Body of pancreas (tissue), 4 donors: ENCODE measurements at regions of chr7 and their contacts with region 1.

Region 1: DNA sequence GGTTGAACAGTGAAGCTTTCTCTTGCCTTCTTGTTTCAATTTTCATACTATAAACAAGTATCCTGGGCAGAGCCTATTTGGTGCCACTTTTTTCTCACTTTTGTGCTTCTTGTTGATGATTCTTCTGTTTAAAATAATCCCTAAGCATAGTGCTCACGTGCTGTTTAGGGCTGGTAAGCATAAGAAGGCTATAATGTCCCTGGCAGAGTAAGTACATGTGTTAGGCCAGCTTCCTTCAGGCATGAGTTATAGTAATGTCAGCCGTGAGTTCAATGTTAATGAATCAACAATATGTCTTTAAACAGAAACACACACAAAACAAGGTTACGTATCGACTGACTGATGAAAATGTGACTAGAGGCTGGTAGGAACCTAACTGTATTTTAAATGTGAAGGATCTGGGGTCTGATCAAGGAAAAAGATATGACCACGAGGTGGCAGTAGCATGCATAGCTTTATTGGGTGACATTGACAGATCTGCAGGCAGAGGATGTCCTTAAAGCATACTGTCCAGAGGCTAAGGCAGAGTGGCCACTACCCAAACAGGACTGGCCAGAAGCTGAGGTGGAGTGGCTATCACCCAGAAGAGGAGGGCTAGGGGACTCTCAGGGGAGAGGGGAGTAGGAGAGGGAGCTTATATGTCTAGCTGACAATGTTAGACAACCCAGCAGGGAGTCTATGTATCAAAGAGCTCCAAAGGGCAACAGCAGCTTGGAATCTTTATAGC is 113.7 kb downstream of the BRAF start:
- DNase-seq: peak; percentile 61 to 73 (median 64)
- ATAC-seq: peak; percentile 76
- H3K4me3 ChIP-seq: no peak overlapping the region
- H3K27ac ChIP-seq: no peak overlapping the region
- H3K4me1 ChIP-seq: no peaks in the 10 kb centered on the region
- H3K27me3 ChIP-seq: no peaks in the 10 kb centered on the region
- CTCF ChIP-seq: peak; percentile 58 to 84 (median 77)
- POLR2A ChIP-seq: no peak

Region 2: GRCh38 chr7:140165422-140165821 is 645.6 kb before region 1 on chr7:
- intact Hi-C with region 1: no loop called
- DNase-seq: no peak
- ATAC-seq: no peak
- H3K4me3 ChIP-seq: no peak overlapping the region
- H3K27ac ChIP-seq: no peak overlapping the region
- H3K4me1 ChIP-seq: peaks cover 33% of the 10 kb centered on the region
- H3K27me3 ChIP-seq: no peaks in the 10 kb centered on the region
- CTCF ChIP-seq: no peak
- POLR2A ChIP-seq: no peak

Region 3: GRCh38 chr7:140924019-140924820 is 113.2 kb after region 1 on chr7:
- intact Hi-C with region 1: loop called (anchors 10 kb)
- DNase-seq: peak; percentile 71 to 78 (median 74)
- ATAC-seq: peak; percentile 82
- H3K4me3 ChIP-seq: peak overlapping the region; percentile 92 to 93
- H3K27ac ChIP-seq: peak overlapping the region; percentile 91 to 99 (median 98)
- H3K4me1 ChIP-seq: peaks cover 26% of the 10 kb centered on the region
- H3K27me3 ChIP-seq: no peaks in the 10 kb centered on the region
- CTCF ChIP-seq: peak in 6 of 7 experiments; percentile 7 to 50 (median 39)
- POLR2A ChIP-seq: peak; percentile 54 to 58 (median 57)

Region 4: DNA sequence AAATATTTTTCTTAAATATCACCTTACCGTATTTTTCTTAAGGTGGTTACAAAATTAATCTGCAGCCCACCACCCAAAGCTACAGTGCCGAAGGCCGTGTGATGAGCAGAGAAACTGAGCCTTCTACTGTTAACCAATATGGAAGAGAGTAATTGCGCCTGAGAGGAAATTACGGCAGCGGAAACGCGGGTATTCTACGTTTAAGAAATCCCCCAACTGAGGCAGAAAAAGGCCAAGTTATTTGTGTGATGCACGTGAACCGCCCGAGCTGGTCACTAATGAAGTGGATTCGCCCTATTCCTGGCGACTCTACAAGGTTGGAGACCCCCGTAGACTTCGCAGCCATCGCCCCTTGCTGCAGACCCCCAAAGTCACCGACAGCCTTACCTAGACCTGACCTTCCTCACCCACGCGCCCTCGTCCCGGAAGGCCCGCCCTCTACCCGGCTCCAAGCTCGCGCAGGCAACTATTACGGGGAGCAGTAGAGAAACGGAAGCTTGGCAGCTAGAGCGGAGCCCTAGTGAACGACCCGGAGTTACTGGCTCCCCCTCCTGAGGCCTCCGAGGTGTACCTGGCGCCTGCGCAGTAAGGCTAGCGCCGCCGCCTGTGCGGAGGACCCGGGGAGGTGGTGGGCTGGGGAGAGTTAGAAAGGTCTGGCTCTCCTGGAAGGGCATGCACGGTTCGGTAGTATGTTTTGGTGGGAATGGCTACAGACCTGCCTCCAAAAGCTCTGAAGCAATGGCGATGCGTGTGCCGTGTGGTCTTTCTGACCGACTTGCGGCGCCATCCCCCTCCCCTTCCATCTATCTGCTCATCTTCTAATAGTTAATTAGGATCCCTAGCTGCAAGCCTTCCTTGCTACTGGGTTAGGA is 203.8 kb after region 1 on chr7 and contains the start of gene MRPS33:
- intact Hi-C with region 1: loop called (anchors 5 kb)
- DNase-seq: peak; percentile 93 to 97 (median 96)
- ATAC-seq: peak; percentile 100
- H3K4me3 ChIP-seq: peak within 1 kb of the TSS; percentile 32 to 60
- H3K27ac ChIP-seq: peak within 1 kb of the TSS; percentile 64 to 92 (median 78)
- H3K4me1 ChIP-seq: peaks cover 13% of the 10 kb centered on the region
- H3K27me3 ChIP-seq: no peaks in the 10 kb centered on the region
- CTCF ChIP-seq: peak in 4 of 7 experiments; percentile 9 to 56 (median 20)
- POLR2A ChIP-seq: peak; percentile 55 to 90 (median 89)
- total RNA-seq, gene MRPS33: 4.6 to 9.9 TPM